Activated CD4-positive, alpha-beta T cell treated with anti-CD3 and anti-CD28 coated beads for 36 hours (primary cell): ENCODE measurements at regions of chr9 and their contacts with region 1.

Region 1: GRCh38 chr9:70829591-70830265 is 291.7 kb downstream of the TRPM3 start:
- DNase-seq: no peak
- ATAC-seq: no peak
- H3K4me3 Mint-ChIP-seq: no peak overlapping the region
- H3K27ac Mint-ChIP-seq: no peak overlapping the region
- H3K4me1 Mint-ChIP-seq: no peaks in the 10 kb centered on the region
- H3K27me3 Mint-ChIP-seq: peaks cover 9% of the 10 kb centered on the region

Region 2: GRCh38 chr9:70789086-70789485 is 40.6 kb before region 1 on chr9:
- CTCF ChIA-PET with region 1: no interaction called
- POLR2A ChIA-PET with region 1: no interaction called
- intact Hi-C with region 1: loop called in 1 of 2 experiments (anchors 5 kb)
- DNase-seq: no peak
- ATAC-seq: no peak
- H3K4me3 Mint-ChIP-seq: no peak overlapping the region
- H3K27ac Mint-ChIP-seq: no peak overlapping the region
- H3K4me1 Mint-ChIP-seq: no peaks in the 10 kb centered on the region
- H3K27me3 Mint-ChIP-seq: no peaks in the 10 kb centered on the region